ENCODE measurements at regions of chr10 and their contacts with region 1.

Region 1: GRCh38 chr10:73625884-73626752 is 15.2 kb downstream of the MYOZ1 start:
- DNase-seq: peak in 1 of 2 donors; percentile 96
- H3K4me3 ChIP-seq: peak overlapping the region; percentile 93 to 99
- H3K27ac ChIP-seq: peak overlapping the region; percentile 86
- H3K4me1 ChIP-seq: peaks cover 9% of the 10 kb centered on the region
- H3K27me3 ChIP-seq: no peaks in the 10 kb centered on the region
- CTCF ChIP-seq: no peak
- POLR2A ChIP-seq: peak in 1 of 2 donors; percentile 30

Region 2: GRCh38 chr10:72525277-72525676 is 1100.8 kb before region 1 on chr10:
- intact Hi-C with region 1: no loop called
- DNase-seq: no peak
- H3K4me3 ChIP-seq: no peak overlapping the region
- H3K27ac ChIP-seq: no peak overlapping the region
- H3K4me1 ChIP-seq: no peaks in the 10 kb centered on the region
- H3K27me3 ChIP-seq: no peaks in the 10 kb centered on the region
- CTCF ChIP-seq: no peak
- POLR2A ChIP-seq: no peak

Region 3: DNA sequence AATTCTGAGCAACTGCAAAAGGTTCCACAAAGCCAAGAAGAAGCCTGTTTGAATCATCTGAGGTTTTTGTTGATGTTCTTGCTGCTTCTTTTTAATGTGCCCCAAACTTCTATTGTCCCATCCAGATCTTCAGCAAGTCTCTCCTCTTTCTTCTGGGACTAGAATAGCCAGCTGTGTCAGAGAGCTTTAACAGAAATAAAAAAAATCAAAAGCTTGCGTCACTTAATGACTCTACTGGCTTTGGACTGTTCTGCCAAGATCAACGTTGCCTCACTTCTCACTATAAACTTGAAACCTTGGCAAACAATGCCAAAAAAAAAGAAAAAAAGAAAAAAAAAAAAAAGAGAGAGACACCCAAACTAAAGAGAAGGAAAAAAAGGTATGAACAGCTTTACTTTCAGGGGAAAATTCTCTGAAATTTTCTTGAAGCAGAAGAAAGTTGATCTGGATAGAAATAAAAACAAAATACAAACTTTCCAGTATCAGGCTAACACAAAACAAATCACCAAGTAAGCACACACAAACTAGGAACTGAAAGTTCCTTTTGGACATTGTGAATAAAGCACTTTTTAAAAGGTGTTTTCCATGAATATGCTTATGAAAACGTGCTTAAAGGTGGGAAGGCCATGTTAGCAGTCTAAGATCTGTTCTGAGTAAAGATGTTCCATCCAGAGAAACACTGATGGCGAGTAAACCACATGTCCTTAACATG is 49.8 kb before region 1 on chr10:
- intact Hi-C with region 1: loop called (anchors 5 kb)
- DNase-seq: no peak
- H3K4me3 ChIP-seq: peak overlapping the region; percentile 15 to 26
- H3K27ac ChIP-seq: peak overlapping the region; percentile 79
- H3K4me1 ChIP-seq: peaks cover 51% of the 10 kb centered on the region
- H3K27me3 ChIP-seq: no peaks in the 10 kb centered on the region
- CTCF ChIP-seq: no peak
- POLR2A ChIP-seq: peak in 1 of 2 donors; percentile 49

Measured in vagina (tissue), 2 donors.